Left ventricle myocardium superior (tissue), 1 donor: ENCODE measurements at regions of chr1 and their contacts with region 1.

Region 1: DNA sequence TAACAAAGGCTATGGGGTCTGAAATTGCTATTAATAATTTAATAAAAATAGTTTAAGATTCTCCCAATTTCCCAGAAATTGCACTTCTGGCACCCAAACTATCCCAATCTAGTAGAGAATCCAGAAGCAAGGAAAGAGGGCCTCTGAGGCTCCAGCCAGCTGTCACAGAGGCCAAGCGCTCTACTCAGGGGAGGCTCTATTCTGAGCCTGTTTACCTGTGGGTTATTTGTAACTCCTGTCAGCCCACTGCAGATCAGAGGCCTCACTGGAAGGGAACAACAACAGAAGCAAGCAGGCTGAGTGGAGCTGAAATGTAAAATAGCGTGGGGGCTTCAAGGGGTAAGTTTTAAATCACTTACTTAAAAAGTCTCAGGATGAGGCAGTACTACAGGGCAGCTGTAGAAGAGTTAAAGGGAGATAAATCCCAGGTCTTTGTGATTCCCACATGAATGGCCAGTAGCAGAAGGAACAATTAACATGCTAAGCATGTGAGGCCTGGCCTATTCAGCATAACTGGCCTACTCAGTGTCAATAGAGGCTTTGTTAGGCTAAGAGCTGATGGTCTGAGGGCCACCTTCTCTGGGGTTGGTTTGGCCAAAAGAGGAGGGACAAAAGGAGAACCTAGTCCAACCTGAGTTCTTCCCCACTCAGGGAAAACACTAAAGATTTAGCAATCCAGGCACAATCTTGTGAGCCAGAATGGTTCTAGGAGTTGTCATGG is 12.8 kb downstream of the ZNF687 start:
- DNase-seq: no peak
- ATAC-seq: no peak

Region 2: DNA sequence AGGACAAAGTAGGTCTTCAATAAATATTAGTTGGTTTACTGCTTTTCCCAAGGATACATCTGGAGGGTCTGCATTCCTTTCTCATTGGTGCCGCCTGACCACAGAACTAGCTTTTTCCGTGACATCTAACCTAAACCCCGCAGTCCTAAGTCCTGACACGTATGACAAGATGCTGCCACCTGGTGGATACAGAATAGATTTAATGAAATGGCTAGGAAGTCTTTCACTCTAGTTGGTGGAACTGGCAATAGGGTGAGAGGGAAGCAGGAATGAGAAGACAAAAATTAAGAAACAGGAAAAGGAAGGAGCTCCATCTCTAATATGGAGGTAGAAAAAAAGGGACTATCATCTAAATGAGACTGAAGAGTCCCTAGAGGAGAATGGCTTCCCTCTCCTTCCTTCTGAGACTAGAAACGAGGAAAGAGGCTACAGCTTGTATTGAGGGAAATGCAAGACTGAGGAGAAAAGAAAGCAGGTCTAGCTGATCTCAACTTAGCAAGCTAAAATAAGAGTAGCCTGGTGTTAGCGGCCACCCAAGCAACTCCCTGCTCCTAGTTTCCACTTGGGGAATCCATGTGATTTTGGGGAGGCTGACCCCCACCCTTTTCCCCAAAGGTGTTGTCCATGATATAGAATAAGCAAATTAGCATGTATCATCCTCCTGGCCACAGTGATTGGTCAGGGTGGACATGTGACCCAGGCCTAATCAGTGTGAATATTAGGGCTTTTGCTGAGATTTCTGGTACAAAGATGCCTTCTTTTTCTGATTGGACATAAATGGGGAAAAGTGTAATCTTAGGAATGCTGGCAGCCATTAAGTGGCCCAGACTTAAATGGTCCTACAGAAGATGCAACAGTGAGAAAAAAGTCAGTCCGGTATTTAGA is 46.2 kb after region 1 on chr1:
- intact Hi-C with region 1: loop called (anchors 2 kb)
- DNase-seq: no peak
- ATAC-seq: peak; percentile 90